Common myeloid progenitor, CD34-positive (primary cell): ENCODE measurements at regions of chr9 and their contacts with region 1.

Region 1: GRCh38 chr9:19174127-19174912 is 47.0 kb upstream of the PLIN2 start:
- DNase-seq: peak; percentile 44 to 59 (median 52)
- H3K4me3 ChIP-seq: peak overlapping the region in 1 of 7 experiments; percentile 17
- H3K27ac ChIP-seq: no peak overlapping the region
- H3K4me1 ChIP-seq: peaks cover 5 to 23% (median 14%) of the 10 kb centered on the region in 4 experiments
- H3K27me3 ChIP-seq: peaks cover 0 to 3% (median 0%) of the 10 kb centered on the region in 5 experiments

Region 2: GRCh38 chr9:19085295-19085694 is 89.0 kb before region 1 on chr9:
- CTCF ChIA-PET with region 1: interaction called, 24 read pairs
- POLR2A ChIA-PET with region 1: no interaction called
- DNase-seq: peak; percentile 38 to 55 (median 52)
- H3K4me3 ChIP-seq: no peak overlapping the region
- H3K27ac ChIP-seq: no peak overlapping the region
- H3K4me1 ChIP-seq: no peaks in the 10 kb centered on the region
- H3K27me3 ChIP-seq: no peaks in the 10 kb centered on the region

Region 3: DNA sequence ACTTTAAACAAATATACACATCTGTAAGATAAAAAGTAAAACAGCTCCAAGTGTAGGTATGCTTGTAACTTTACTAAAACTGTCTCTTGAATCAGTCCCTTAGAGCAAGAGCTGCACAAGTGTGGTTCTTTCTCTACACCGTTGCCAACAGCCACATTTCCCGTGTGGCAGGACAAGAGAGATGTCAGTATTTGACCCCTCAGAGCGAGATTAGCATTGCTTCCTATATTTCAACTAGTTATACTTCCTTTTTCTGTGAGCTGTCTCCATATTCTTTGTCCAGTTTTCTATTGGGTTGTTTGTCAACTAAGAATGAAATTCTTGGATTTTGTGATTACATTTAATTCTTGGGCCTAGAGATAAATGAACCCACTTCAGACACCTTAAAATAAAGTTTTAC is 55.1 kb before region 1 on chr9:
- CTCF ChIA-PET with region 1: interaction called, 10 read pairs
- POLR2A ChIA-PET with region 1: no interaction called
- DNase-seq: peak in 2 of 3 donors; percentile 27 to 37
- H3K4me3 ChIP-seq: no peak overlapping the region
- H3K27ac ChIP-seq: no peak overlapping the region
- H3K4me1 ChIP-seq: peaks cover 0 to 20% (median 12%) of the 10 kb centered on the region in 4 experiments
- H3K27me3 ChIP-seq: no peaks in the 10 kb centered on the region

Region 4: GRCh38 chr9:19130436-19130835 is 43.9 kb before region 1 on chr9:
- CTCF ChIA-PET with region 1: interaction called, 11 read pairs
- POLR2A ChIA-PET with region 1: no interaction called
- DNase-seq: no peak
- H3K4me3 ChIP-seq: no peak overlapping the region
- H3K27ac ChIP-seq: no peak overlapping the region
- H3K4me1 ChIP-seq: peaks cover 0 to 20% (median 16%) of the 10 kb centered on the region in 4 experiments
- H3K27me3 ChIP-seq: peaks cover 0 to 5% (median 2%) of the 10 kb centered on the region in 5 experiments

Region 5: GRCh38 chr9:19184144-19184917 is 10.0 kb after region 1 on chr9:
- CTCF ChIA-PET with region 1: interaction called, 10 read pairs
- POLR2A ChIA-PET with region 1: no interaction called
- DNase-seq: peak; percentile 86 to 97 (median 94)
- H3K4me3 ChIP-seq: peak overlapping the region in 6 of 7 experiments; percentile 0 to 63 (median 32)
- H3K27ac ChIP-seq: peak overlapping the region; percentile 64 to 80
- H3K4me1 ChIP-seq: peaks cover 0 to 37% (median 30%) of the 10 kb centered on the region in 4 experiments
- H3K27me3 ChIP-seq: no peaks in the 10 kb centered on the region

Region 6: GRCh38 chr9:19223724-19224123 is 49.4 kb after region 1 on chr9:
- CTCF ChIA-PET with region 1: no interaction called
- POLR2A ChIA-PET with region 1: no interaction called
- DNase-seq: no peak
- H3K4me3 ChIP-seq: no peak overlapping the region
- H3K27ac ChIP-seq: no peak overlapping the region
- H3K4me1 ChIP-seq: no peaks in the 10 kb centered on the region
- H3K27me3 ChIP-seq: no peaks in the 10 kb centered on the region

Region 7: DNA sequence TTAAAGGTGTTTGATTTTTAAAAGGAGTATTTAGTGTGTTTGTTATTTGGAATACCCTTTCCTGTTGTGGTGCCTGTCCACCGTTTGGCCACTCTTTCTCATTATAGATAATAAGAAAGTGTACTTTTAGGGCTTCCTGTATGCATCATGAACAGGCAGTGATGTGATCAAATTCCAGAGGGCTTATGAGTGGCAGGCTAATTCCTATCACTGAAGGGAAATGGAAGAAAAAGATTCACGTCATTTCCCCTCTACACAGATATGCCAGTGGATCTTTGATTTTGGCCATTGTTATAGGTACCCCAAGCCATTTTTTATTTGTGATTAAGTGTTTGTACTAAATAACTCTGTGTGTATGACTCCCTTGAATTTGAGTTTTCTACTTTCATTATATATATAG is 168.6 kb after region 1 on chr9:
- CTCF ChIA-PET with region 1: no interaction called
- POLR2A ChIA-PET with region 1: no interaction called
- DNase-seq: no peak
- H3K4me3 ChIP-seq: no peak overlapping the region
- H3K27ac ChIP-seq: peak overlapping the region in 1 of 2 experiments; percentile 29
- H3K4me1 ChIP-seq: no peaks in the 10 kb centered on the region
- H3K27me3 ChIP-seq: no peaks in the 10 kb centered on the region